ENCODE measurements at regions of chr14 and their contacts with region 1.

Region 1: DNA sequence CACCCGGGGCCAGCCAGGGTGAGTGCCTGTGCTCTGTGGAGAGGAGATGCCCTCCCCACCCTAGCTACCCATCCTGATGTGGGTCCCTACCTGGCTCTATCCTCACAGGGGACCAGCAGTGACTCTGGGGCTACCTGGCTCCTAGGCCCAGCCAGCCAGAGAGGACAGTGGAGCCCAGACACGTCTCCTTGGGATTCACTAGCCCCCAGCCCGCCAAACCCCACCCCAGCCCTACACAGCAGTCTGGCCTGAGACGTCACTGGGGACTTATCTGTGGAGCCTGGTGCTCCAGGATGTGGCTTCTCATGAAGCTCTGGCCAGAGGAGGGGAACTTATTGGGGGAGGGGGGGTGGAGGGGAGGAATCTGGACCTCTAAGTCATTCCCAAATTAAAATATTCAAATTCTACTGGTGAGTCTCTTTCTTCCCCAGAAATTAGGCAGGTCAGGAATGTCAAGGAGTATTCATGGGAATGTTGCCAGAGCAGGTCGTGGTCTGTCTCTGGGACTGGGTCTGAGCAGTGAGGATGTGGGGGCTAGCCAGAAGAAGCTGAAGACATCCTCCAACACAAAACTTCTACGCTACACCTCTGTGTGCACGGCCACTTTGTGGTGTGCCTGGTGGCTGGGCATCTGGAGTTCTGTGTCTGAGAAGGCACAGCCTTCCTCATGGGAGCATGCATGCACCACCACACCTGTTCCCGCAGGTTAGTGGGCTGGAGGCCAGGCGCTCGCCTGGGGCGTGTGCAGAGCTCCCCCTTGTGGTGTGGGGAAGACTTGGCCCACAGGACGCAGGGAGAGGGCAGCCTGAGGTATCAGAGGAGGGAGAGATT is 2.7 kb downstream of the CMTM5 start:
- DNase-seq: peak; percentile 49 to 74 (median 56)
- H3K4me3 ChIP-seq: no peak overlapping the region
- H3K4me3 Mint-ChIP-seq: no peak overlapping the region
- H3K27ac ChIP-seq: no peak overlapping the region
- H3K27ac Mint-ChIP-seq: no peak overlapping the region
- H3K4me1 ChIP-seq: no peaks in the 10 kb centered on the region
- H3K4me1 Mint-ChIP-seq: no peaks in the 10 kb centered on the region
- H3K27me3 ChIP-seq: no peaks in the 10 kb centered on the region
- H3K27me3 Mint-ChIP-seq: peaks cover 13 to 25% of the 10 kb centered on the region in 2 donors

Region 2: GRCh38 chr14:22973217-22974032 is 406.2 kb before region 1 on chr14:
- CTCF ChIA-PET with region 1: no interaction called
- POLR2A ChIA-PET with region 1: no interaction called
- DNase-seq: peak in 3 of 5 donors; percentile 27 to 53 (median 34)
- H3K4me3 ChIP-seq: no peak overlapping the region
- H3K4me3 Mint-ChIP-seq: peak overlapping the region in 1 of 7 donors; percentile 32
- H3K27ac ChIP-seq: no peak overlapping the region
- H3K27ac Mint-ChIP-seq: peak overlapping the region in 1 of 8 donors; percentile 31
- H3K4me1 ChIP-seq: no peaks in the 10 kb centered on the region
- H3K4me1 Mint-ChIP-seq: no peaks in the 10 kb centered on the region
- H3K27me3 ChIP-seq: peaks cover 4% of the 10 kb centered on the region
- H3K27me3 Mint-ChIP-seq: peaks cover 3 to 9% of the 10 kb centered on the region in 2 donors

Region 3: GRCh38 chr14:23258256-23258655 is 121.3 kb before region 1 on chr14:
- CTCF ChIA-PET with region 1: interaction called, 13 read pairs
- POLR2A ChIA-PET with region 1: no interaction called
- DNase-seq: no peak
- H3K4me3 ChIP-seq: no peak overlapping the region
- H3K4me3 Mint-ChIP-seq: no peak overlapping the region
- H3K27ac ChIP-seq: no peak overlapping the region
- H3K27ac Mint-ChIP-seq: no peak overlapping the region
- H3K4me1 ChIP-seq: no peaks in the 10 kb centered on the region
- H3K4me1 Mint-ChIP-seq: no peaks in the 10 kb centered on the region
- H3K27me3 ChIP-seq: peaks cover 8% of the 10 kb centered on the region
- H3K27me3 Mint-ChIP-seq: peaks cover 21 to 59% of the 10 kb centered on the region in 2 donors

Region 4: DNA sequence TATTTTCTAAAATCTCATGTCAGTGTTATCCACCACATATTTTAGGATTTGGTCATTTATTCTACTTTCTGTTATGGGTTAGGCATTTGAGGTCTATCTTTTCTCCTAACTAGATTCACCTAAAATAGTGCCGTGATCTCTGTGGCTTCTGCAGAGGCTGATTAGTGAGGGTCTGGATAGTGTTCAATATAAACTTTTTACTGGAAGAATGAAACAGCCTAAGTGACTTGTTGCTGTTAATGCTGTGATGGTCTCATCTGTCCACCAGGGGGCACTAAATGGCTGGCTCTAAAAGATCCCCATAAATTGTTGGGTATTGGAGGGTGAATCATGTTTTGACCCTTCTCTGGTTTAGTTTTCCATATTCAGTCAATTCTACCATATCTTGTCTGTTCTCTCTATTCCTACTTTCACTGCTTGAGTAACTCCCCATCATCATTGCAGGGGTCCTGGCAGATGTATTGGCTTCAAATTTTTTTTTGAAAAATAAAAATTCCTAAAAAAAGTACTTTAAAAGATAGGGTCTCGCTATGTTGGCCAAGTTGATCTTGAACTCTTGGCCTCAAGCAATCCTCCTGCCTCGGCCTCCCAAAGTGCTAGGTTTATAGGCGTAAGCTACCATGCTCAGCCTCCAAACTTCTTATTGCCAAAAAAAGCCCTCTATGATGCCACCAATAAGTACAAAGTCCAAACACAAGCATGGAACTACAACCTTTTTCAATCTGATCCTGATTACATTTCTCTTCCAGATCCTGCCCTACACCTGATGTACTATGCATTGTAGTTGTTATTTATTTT is 51.4 kb before region 1 on chr14:
- CTCF ChIA-PET with region 1: interaction called, 23 read pairs
- POLR2A ChIA-PET with region 1: no interaction called
- DNase-seq: peak; percentile 37 to 74 (median 47)
- H3K4me3 ChIP-seq: no peak overlapping the region
- H3K4me3 Mint-ChIP-seq: peak overlapping the region in 1 of 7 donors; percentile 46
- H3K27ac ChIP-seq: no peak overlapping the region
- H3K27ac Mint-ChIP-seq: peak overlapping the region in 2 of 8 donors; percentile 37 to 38
- H3K4me1 ChIP-seq: peaks cover 2% of the 10 kb centered on the region
- H3K4me1 Mint-ChIP-seq: peaks cover 4 to 11% (median 6%) of the 10 kb centered on the region in 3 donors
- H3K27me3 ChIP-seq: no peaks in the 10 kb centered on the region
- H3K27me3 Mint-ChIP-seq: peaks cover 0 to under 1% of the 10 kb centered on the region in 2 donors